ENCODE measurements at regions of chr17 and their contacts with region 1.

Region 1: GRCh38 chr17:81890447-81891299 is 713 bp downstream of the ALYREF start:
- DNase-seq: peak; percentile 51
- ATAC-seq: no peak
- H3K4me3 Mint-ChIP-seq: peak overlapping the region; percentile 85
- H3K27ac Mint-ChIP-seq: peak overlapping the region; percentile 93
- H3K4me1 Mint-ChIP-seq: peaks cover 32% of the 10 kb centered on the region
- H3K27me3 Mint-ChIP-seq: no peaks in the 10 kb centered on the region

Region 2: DNA sequence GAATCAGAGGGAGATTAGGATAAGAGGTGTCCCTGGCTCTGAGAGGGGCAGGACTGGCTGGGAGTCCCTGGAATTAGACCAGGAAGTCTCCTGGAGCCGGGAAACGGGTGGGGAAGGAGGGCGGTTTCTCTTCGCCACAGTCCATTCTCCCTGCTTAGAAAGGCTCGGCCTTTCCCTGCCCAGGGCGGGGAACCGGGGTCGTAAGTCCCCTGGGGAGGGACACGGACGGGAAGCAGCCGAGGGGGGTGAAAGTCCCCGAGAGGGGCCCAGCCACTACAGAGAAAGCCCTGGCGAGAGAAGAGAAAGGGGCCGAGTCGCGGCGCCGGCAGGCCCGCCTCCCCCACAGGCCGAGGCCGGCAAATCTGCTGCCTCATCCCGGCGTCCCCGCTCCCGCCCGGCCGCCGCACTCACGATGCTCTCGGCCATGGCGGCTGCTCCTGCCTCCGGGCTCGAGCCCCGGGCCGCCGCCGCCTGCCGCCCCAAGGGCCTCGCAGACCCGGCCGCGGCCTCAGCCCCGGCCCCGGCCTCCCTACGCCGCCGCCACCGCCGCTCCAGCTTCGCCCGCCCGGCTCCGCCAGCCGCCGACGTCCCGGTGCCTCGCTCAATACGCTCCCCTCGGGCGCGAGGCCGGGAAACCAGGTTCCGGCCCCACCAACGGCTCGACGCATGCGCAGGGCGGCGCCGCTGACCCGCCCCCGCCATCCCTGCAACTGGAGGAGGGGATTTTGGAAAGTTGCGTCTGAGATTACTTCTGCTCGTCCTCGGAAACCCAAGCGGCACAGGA is 254.0 kb before region 1 on chr17 and contains the starts of genes NPLOC4 and TSPAN10:
- CTCF ChIA-PET with region 1: no interaction called
- POLR2A ChIA-PET with region 1: no interaction called
- intact Hi-C with region 1: loop called in 1 of 2 experiments (anchors 1 kb)
- DNase-seq: peak; percentile 91
- ATAC-seq: peak; percentile 89
- H3K4me3 Mint-ChIP-seq: peak within 1 kb of the TSS; percentile 96
- H3K27ac Mint-ChIP-seq: peak within 1 kb of the TSS; percentile 84
- H3K4me1 Mint-ChIP-seq: peaks cover 23% of the 10 kb centered on the region
- H3K27me3 Mint-ChIP-seq: no peaks in the 10 kb centered on the region
- total RNA-seq, gene NPLOC4: 71.8 to 93.1 TPM
- total RNA-seq, gene TSPAN10: 0.34 to 0.35 TPM

Region 3: GRCh38 chr17:81702971-81703746 is 187.5 kb before region 1 on chr17 and contains the start of gene MRPL12:
- CTCF ChIA-PET with region 1: no interaction called
- POLR2A ChIA-PET with region 1: no interaction called
- intact Hi-C with region 1: loop called in 1 of 2 experiments (anchors 2 kb)
- DNase-seq: peak; percentile 95
- ATAC-seq: peak; percentile 89
- H3K4me3 Mint-ChIP-seq: peak within 1 kb of the TSS; percentile 86
- H3K27ac Mint-ChIP-seq: peak within 1 kb of the TSS; percentile 97
- H3K4me1 Mint-ChIP-seq: peaks cover 24% of the 10 kb centered on the region
- H3K27me3 Mint-ChIP-seq: no peaks in the 10 kb centered on the region
- total RNA-seq, gene MRPL12: 94.0 to 116 TPM

Region 4: DNA sequence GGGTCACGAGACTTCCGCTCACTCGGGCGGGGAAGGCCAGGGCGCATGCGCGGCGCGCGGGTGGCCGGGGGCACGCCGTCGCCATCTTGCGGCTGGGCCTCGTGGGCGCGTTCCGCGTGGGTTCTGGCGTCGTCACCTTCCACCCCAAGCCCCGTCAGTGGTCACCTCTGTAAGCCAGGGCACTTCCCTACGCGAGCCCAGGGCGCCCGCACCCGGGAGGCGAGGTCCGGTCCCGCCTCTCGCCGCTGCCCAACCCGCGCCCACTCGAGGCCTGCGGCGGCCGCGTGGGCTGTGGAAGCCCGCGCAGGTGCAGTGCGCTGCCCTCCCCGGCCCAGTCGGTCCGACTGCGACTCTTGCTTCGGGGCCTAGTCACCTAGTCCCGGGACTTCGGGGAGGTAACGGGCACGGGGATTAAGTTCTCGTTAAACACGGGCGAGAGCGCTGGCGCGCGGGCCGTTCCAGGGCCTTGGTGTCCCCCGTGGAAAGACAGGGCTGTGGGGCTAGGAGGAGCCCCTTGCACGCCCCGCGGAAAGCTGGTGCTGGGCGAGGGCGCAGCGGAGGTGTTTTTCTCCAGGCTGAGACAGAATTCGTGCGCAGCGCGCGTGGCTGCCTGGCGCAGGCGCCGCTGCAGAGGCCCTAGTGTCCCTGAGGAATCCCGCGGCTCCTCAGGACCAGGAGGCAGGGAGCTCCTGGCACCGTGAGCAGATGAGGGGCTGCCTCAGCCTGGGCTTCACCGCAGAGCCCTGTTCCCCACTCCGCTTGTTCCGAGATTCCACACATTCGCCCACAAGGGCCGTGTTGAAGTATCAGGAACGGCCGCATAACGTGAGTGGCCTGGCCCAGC is 19.1 kb before region 1 on chr17:
- CTCF ChIA-PET with region 1: interaction called, 14 read pairs
- POLR2A ChIA-PET with region 1: interaction called, 14 read pairs
- intact Hi-C with region 1: loop called (anchors 1 kb)
- DNase-seq: peak; percentile 98
- ATAC-seq: no peak
- H3K4me3 Mint-ChIP-seq: peak overlapping the region; percentile 81
- H3K27ac Mint-ChIP-seq: peak overlapping the region; percentile 92
- H3K4me1 Mint-ChIP-seq: peaks cover 34% of the 10 kb centered on the region
- H3K27me3 Mint-ChIP-seq: no peaks in the 10 kb centered on the region

Region 5: DNA sequence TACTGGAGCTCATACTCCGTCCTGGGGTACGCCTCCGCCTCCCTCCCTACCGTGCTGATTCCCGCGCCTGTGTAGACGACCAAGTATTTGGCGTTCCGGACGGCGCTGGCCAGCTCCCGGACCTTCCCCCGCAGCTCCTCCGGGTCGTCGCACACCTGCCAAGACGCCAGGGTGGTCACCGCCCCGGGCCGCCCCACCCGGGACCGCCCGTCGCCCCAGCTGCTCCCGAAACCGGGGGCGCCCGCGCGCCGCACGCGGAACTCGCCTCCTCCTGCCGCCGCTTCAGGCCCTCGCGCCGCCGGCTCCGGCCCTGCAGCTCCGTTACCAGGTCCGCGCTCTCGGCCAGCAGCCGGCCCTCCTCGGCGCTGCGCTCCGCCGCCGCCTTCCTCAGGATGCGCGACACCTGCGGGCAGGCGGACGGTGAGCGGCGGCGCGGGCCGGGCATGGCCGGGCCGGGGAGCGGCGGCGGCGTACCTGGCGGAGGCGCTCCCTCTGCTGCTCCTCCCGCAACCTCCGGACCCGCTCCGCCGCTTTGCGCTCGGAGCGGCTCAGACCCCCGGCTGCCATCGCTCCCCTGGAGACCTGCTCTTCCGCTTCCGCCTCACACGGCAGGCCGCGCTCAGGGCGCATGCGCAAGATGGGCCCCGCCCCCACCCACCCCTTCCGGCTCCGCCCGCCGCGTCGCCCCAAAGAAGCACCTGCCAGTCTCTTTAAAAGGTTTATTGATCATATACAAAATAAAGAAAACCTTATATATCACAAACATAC is 27.1 kb after region 1 on chr17 and contains the start of gene SIRT7:
- CTCF ChIA-PET with region 1: no interaction called
- POLR2A ChIA-PET with region 1: interaction called, 4 read pairs
- intact Hi-C with region 1: loop called in 1 of 2 experiments (anchors 1 kb)
- DNase-seq: peak; percentile 90
- ATAC-seq: peak; percentile 87
- H3K4me3 Mint-ChIP-seq: peak within 1 kb of the TSS; percentile 85
- H3K27ac Mint-ChIP-seq: peak within 1 kb of the TSS; percentile 82
- H3K4me1 Mint-ChIP-seq: peaks cover 23% of the 10 kb centered on the region
- H3K27me3 Mint-ChIP-seq: no peaks in the 10 kb centered on the region
- total RNA-seq, gene SIRT7: 29.3 to 31.8 TPM

Region 6: GRCh38 chr17:81941790-81942553 is 51.3 kb after region 1 on chr17:
- CTCF ChIA-PET with region 1: no interaction called
- POLR2A ChIA-PET with region 1: no interaction called
- intact Hi-C with region 1: loop called in 1 of 2 experiments (anchors 1 kb)
- DNase-seq: no peak
- ATAC-seq: no peak
- H3K4me3 Mint-ChIP-seq: no peak overlapping the region
- H3K27ac Mint-ChIP-seq: no peak overlapping the region
- H3K4me1 Mint-ChIP-seq: peaks cover 5% of the 10 kb centered on the region
- H3K27me3 Mint-ChIP-seq: peaks cover 5% of the 10 kb centered on the region

Measured in activated CD4-positive, alpha-beta T cell treated with anti-CD3 and anti-CD28 coated beads for 36 hours (primary cell).